AG04449 (cell line): ENCODE measurements at regions of chr11 and their contacts with region 1.

Region 1: GRCh38 chr11:44785856-44786606 is 59.3 kb downstream of the TSPAN18 start:
- DNase-seq: no peak
- H3K4me3 ChIP-seq: no peak overlapping the region
- CTCF ChIP-seq: peak; percentile 25

Region 2: DNA sequence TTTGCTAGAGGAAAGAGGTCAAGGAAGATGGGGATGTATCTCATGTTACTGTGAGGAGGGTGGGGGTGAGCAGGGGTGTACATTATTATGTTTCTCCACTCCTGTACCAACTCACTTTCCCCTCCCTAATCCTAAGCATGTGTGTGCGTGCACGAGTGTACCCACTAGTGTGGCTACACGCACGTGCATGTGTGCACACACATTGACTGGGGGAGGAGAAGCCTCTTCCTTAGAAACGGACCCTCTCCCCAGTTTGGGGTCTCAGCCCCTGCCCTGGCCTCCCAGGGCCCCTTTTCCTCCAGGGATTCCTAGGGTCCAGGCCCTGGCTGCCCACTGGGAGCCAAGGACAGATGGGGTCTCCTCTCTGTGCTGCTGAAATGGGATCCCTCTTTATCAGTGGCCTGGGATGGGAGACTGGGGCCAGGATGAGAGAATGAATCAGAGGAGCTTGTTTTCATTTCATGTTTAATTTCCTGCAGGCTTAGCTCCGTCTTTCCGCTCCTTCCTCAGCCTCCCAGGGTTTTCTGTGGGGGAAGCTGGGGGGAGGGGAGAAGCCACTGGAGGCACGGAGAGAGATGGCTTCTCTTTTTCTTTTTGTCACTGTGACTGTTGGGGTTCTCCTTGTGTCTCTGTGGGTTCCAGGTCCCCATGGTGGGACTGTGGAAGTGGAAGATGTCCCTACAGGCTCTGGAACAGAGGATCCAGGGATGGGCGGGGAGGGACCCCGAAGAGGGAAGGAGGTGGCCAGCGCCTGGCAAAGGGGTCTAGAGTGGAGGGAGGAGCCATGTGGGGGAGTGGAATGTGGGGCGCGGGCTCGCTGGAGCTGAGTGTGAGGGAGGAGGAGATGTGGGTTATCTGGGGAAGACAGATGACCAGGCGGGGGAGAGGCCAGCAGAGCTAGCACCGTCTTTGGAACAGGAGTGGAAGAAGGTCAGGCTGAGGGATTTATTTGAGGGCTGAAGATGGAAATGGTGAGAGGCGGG is 516.4 kb before region 1 on chr11:
- CTCF ChIA-PET with region 1: no interaction called
- POLR2A ChIA-PET with region 1: no interaction called
- DNase-seq: no peak
- H3K4me3 ChIP-seq: peak overlapping the region; percentile 33
- CTCF ChIP-seq: no peak

Region 3: DNA sequence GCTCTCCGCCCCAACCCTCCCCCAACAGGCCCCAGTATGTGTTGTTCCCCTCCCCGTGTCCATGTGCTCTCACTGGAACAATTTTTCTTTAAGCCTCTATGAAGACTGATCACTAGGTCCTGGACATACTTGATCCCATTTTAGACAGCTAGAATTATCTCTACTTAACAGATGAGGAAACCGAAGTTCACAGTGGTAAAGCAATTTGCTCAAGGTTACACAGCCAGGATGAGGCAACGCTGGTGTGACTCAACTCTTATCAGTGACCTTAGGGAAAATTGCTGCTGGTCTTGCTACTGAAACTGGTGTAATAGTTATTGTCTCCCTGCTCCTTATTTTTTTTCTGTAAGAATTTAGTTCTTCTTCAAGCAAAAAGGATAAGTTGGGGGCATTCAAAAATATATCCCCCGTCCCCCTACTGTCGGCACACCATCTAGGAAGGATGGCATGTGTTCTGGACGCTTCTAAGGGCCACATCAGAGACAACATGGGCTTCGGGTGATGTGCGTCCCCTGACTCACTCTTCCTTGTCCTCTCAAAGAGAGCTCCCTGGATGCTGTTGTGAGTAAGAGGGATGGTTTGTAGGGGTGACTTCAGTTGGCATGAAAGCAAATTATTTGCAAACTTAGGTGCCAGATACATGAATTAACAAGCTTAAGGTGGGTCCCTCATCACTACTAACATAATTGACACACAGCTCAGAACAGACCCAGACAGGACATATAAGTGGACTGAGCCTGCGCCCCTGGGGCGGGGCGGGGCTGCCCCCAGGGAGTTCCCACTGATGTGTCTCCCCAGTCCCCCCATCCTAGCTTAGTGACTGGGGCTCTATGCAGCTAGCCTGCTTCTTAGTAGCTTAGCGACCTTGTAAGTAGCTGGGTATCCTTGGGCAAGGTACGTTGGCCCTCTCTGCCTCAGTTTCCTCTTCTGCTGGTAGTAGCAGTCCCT is 452.5 kb before region 1 on chr11:
- CTCF ChIA-PET with region 1: no interaction called
- POLR2A ChIA-PET with region 1: no interaction called
- DNase-seq: no peak
- H3K4me3 ChIP-seq: no peak overlapping the region
- CTCF ChIP-seq: no peak

Region 4: DNA sequence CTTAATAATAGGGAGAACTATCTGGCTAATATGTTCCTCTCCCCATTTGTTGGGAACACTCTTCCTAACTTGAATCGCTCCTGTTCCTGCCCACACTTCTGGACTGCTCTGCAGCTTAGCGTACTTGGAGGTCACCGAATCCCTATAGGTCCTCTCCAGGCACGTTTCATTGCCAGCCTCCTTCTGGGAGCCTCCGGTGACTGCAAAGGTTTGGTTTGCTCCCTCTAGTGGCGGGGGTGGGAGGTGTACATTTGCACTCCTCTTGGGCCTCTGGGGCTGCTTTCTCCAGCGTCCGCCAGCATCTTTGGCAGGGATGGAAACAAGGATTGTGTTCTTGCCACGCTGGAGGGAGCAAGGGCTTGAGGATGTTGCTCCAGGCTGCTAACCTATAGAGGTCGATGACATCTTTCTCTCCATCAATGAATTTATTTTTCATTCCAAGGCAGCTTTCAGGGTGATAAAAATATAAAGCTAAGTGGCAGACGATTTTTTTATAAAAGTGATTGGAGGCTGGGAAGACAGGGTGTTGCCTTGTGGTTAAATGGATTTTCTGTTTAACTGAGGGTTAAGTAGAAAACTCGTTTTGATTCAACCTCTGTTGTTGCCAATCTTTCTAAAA is 10.6 kb before region 1 on chr11:
- CTCF ChIA-PET with region 1: interaction called, 53 read pairs
- POLR2A ChIA-PET with region 1: no interaction called
- DNase-seq: no peak
- H3K4me3 ChIP-seq: no peak overlapping the region
- CTCF ChIP-seq: peak; percentile 64

Region 5: DNA sequence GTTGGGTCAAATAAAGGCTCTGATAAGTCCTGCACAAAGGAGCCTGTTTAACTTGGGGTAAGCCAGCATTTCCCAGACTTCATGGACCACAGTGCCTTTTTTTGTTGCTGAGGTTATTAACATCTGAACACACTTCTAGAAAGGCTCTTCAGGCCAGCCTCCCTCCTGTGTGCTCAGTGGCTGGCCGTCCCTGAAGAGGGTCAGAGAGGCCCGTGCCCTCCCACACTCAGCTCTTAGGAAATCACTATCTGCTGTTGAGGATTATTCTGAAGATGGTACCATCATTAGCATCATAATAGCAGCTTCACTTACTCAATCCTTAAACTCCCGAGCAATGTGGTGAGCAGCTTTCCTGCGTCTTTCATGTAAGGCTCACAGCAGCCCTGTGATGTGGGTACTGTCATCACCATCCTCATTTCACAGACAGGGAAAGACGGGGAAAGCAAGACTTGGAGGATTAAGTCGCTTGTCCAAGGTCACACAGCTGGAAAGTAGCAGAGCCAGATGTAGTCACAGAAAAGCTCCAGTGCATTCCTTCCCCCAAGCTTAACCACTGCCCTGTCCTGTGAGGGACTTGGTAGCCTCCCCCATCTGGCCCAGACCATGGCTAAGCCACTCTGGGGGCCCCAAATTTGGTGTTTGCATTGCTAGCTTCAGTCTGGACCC is 12.0 kb after region 1 on chr11:
- CTCF ChIA-PET with region 1: interaction called, 11 read pairs
- POLR2A ChIA-PET with region 1: interaction called, 3 read pairs
- DNase-seq: no peak
- H3K4me3 ChIP-seq: no peak overlapping the region
- CTCF ChIP-seq: no peak